ENCODE measurements at regions of chr1 and their contacts with region 1.

Region 1: GRCh38 chr1:201792534-201793305 is 36.2 kb upstream of the IPO9 start:
- DNase-seq: peak in 32 of 35 experiments; percentile 2 to 63 (median 25)
- ATAC-seq: peak in 1 of 4 experiments; percentile 50
- H3K4me3 ChIP-seq: no peak overlapping the region
- H3K4me3 Mint-ChIP-seq: no peak overlapping the region
- H3K27ac ChIP-seq: no peak overlapping the region
- H3K27ac Mint-ChIP-seq: no peak overlapping the region
- H3K4me1 ChIP-seq: peaks cover 0 to 5% of the 10 kb centered on the region in 2 experiments
- H3K4me1 Mint-ChIP-seq: peaks cover 0 to 4% (median 0%) of the 10 kb centered on the region in 3 donors
- H3K27me3 ChIP-seq: no peaks in the 10 kb centered on the region
- H3K27me3 Mint-ChIP-seq: no peaks in the 10 kb centered on the region

Region 2: DNA sequence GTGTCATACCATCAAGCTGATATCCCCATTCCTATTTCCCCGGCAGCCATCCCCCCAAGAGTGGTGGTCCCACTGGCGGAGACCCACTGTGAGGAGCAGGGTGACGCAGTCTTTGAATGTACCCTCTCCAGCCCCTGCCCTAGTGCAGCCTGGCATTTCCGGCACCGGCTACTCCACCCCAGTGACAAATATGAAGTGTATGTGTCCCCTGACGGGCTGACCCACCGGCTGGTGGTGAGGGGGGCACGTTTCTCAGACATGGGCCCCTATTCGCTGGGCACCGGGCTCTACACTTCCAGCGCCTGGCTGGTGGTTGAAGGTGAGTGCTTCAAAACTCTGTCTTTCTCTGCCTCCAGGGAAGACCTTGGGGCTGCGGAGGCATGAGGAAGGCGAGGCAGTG is 587.7 kb before region 1 on chr1:
- CTCF ChIA-PET with region 1: no interaction called
- POLR2A ChIA-PET with region 1: interaction called in 1 of 2 experiments, 13 read pairs
- DNase-seq: no peak
- ATAC-seq: no peak
- H3K4me3 ChIP-seq: no peak overlapping the region
- H3K4me3 Mint-ChIP-seq: no peak overlapping the region
- H3K27ac ChIP-seq: no peak overlapping the region
- H3K27ac Mint-ChIP-seq: no peak overlapping the region
- H3K4me1 ChIP-seq: no peaks in the 10 kb centered on the region
- H3K4me1 Mint-ChIP-seq: no peaks in the 10 kb centered on the region
- H3K27me3 ChIP-seq: peaks cover 0 to 27% of the 10 kb centered on the region in 2 experiments
- H3K27me3 Mint-ChIP-seq: peaks cover 24 to 25% of the 10 kb centered on the region in 2 donors

Region 3: GRCh38 chr1:201559679-201560162 is 233.0 kb before region 1 on chr1:
- CTCF ChIA-PET with region 1: interaction called, 3 to 15 read pairs
- POLR2A ChIA-PET with region 1: no interaction called
- DNase-seq: peak; percentile 30 to 76 (median 55)
- ATAC-seq: peak; percentile 85 to 95 (median 88)
- H3K4me3 ChIP-seq: no peak overlapping the region
- H3K4me3 Mint-ChIP-seq: no peak overlapping the region
- H3K27ac ChIP-seq: no peak overlapping the region
- H3K27ac Mint-ChIP-seq: no peak overlapping the region
- H3K4me1 ChIP-seq: peaks cover 0 to 6% of the 10 kb centered on the region in 2 experiments
- H3K4me1 Mint-ChIP-seq: peaks cover 2 to 7% (median 4%) of the 10 kb centered on the region in 3 donors
- H3K27me3 ChIP-seq: peaks cover 0 to 13% of the 10 kb centered on the region in 2 experiments
- H3K27me3 Mint-ChIP-seq: peaks cover 0 to 3% of the 10 kb centered on the region in 2 donors

Region 4: GRCh38 chr1:201709564-201710295 is 83.0 kb before region 1 on chr1:
- CTCF ChIA-PET with region 1: interaction called, 6 to 14 read pairs
- POLR2A ChIA-PET with region 1: no interaction called
- DNase-seq: peak in 33 of 35 experiments; percentile 7 to 59 (median 40)
- ATAC-seq: peak; percentile 68 to 83 (median 74)
- H3K4me3 ChIP-seq: no peak overlapping the region
- H3K4me3 Mint-ChIP-seq: no peak overlapping the region
- H3K27ac ChIP-seq: no peak overlapping the region
- H3K27ac Mint-ChIP-seq: no peak overlapping the region
- H3K4me1 ChIP-seq: no peaks in the 10 kb centered on the region
- H3K4me1 Mint-ChIP-seq: no peaks in the 10 kb centered on the region
- H3K27me3 ChIP-seq: peaks cover 0 to 20% of the 10 kb centered on the region in 2 experiments
- H3K27me3 Mint-ChIP-seq: peaks cover 5 to 7% of the 10 kb centered on the region in 2 donors

Region 5: GRCh38 chr1:201937624-201938213 is 145.0 kb after region 1 on chr1:
- CTCF ChIA-PET with region 1: no interaction called
- POLR2A ChIA-PET with region 1: no interaction called
- DNase-seq: no peak
- ATAC-seq: no peak
- H3K4me3 ChIP-seq: no peak overlapping the region
- H3K4me3 Mint-ChIP-seq: no peak overlapping the region
- H3K27ac ChIP-seq: no peak overlapping the region
- H3K27ac Mint-ChIP-seq: no peak overlapping the region
- H3K4me1 ChIP-seq: no peaks in the 10 kb centered on the region
- H3K4me1 Mint-ChIP-seq: no peaks in the 10 kb centered on the region
- H3K27me3 ChIP-seq: peaks cover 0 to 27% of the 10 kb centered on the region in 2 experiments
- H3K27me3 Mint-ChIP-seq: peaks cover 12 to 13% of the 10 kb centered on the region in 2 donors